GM12878 (cell line): ENCODE measurements at regions of chr6 and their contacts with region 1.

Region 1: DNA sequence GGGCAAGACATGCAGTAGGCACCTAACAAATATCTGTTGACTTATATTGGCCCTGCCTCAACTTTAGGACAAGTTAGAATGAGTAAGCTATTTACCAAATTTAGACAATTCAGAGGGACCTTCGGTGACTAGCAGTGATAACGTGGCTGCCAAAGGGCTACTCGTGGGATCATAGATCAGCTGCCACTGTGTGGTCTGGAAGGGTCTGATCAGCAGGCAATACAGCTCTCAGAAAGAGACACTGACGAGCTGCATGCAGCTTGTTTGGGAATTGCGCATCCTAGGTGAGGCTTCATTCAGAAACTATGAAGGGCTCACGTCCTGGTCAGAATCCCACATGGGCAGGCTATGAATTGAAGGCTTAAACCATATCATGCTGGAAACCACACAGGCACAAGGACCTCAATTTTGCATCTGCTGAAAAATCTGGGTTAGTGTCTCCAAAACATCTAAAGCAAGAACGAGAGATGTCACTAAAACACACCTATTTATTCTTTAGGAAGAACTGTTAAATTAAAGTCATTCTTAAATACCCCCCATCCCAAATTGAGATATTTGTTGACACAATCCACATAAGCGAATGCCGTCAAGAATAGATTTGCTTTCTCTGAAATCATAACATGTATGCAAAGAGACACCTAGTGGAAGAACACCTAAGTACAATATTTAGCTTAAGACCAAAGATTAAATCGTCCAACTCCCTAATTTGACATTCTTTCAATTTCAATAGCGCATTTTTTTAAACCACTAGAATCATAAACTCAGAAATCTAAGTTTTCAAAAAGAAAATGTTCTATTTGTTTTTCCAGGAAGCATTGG is 79.6 kb downstream of the IPCEF1 start:
- DNase-seq: no peak
- ATAC-seq: peak; percentile 88
- H3K4me3 ChIP-seq: no peak overlapping the region
- H3K27ac ChIP-seq: no peak overlapping the region
- H3K4me1 ChIP-seq: peaks cover 7% of the 10 kb centered on the region
- H3K27me3 ChIP-seq: no peaks in the 10 kb centered on the region
- CTCF ChIP-seq: peak; percentile 58 to 77 (median 58); a peak in 5 of 6 replicates
- EP300 ChIP-seq: no peak
- POLR2A ChIP-seq: no peak
- RAD21 ChIP-seq: peak; percentile 79

Region 2: DNA sequence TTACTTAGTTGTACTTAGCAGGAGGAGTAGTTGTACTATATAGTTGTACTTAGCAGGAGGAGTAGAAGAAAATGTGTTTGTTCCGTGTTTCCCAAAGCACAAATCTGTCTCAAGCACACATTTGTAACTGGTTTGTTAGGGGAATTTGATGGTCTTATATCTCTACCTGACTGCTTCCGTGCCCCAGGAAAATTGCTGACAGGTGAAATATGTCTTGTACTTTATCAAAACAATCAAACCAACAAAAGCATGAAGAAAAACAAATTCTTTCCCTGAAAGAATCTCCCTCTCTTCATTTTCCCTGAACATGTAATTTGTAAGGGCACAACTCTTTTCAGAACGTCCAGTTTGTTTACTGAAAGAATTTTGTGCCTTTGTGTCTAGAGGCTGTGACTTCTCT is 1039.3 kb before region 1 on chr6:
- CTCF ChIA-PET with region 1: no interaction called
- POLR2A ChIA-PET with region 1: no interaction called
- RAD21 ChIA-PET with region 1: no interaction called
- SMC1A ChIA-PET with region 1: no interaction called
- in situ Hi-C with region 1: no loop called
- intact Hi-C with region 1: no loop called
- DNase-seq: no peak
- ATAC-seq: no peak
- H3K4me3 ChIP-seq: no peak overlapping the region
- H3K27ac ChIP-seq: no peak overlapping the region
- H3K4me1 ChIP-seq: no peaks in the 10 kb centered on the region
- H3K27me3 ChIP-seq: no peaks in the 10 kb centered on the region
- CTCF ChIP-seq: no peak
- EP300 ChIP-seq: no peak
- POLR2A ChIP-seq: no peak
- RAD21 ChIP-seq: no peak

Region 3: GRCh38 chr6:153947808-153948447 is 329.1 kb before region 1 on chr6:
- CTCF ChIA-PET with region 1: interaction called, 5 read pairs
- POLR2A ChIA-PET with region 1: no interaction called
- RAD21 ChIA-PET with region 1: no interaction called
- SMC1A ChIA-PET with region 1: no interaction called
- in situ Hi-C with region 1: no loop called
- intact Hi-C with region 1: loop called (anchors 10 kb)
- DNase-seq: no peak
- ATAC-seq: 0 out of 3 replicates have a peak, but pooled peaks have one; percentile 42
- H3K4me3 ChIP-seq: no peak overlapping the region
- H3K27ac ChIP-seq: no peak overlapping the region
- H3K4me1 ChIP-seq: no peaks in the 10 kb centered on the region
- H3K27me3 ChIP-seq: no peaks in the 10 kb centered on the region; a peak in 1 of 4 replicates
- CTCF ChIP-seq: peak; percentile 78 to 96 (median 95)
- EP300 ChIP-seq: no peak
- POLR2A ChIP-seq: no peak
- RAD21 ChIP-seq: peak; percentile 72

Region 4: DNA sequence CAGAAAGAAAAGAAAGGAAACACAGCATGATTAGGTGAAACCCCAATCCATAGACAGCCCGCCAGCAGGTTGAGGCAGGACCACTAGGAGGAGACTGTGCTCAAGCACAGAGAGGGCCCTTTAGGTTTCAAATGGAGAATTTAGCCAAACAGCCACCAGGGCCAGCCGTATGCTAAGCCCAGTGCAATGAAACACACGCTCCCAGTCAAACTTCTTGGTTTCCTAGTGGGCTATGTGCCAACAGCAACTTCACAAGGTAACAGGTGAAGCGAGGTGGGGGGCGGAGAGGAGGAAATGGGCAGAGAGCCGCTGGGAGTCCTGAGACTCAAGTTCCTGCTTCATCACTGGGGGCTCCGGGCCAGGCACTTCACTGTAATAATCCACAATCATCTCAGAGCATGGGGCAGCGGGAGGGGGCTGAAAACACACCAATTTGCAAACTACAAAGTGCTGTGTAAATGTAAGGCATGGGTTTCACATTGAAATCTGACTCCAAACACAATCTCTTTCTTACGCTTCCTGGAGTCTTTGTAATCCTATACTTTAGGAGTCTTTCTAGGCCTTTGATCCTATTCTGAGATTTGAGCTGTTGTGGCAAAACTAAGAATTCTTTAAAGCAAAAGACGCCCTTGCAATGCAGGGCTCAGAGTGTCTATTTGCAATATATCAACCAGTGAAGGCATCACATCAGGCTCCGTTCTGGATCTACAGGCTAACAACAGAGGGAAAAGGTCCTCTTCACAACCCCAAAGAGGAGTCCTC is 120.7 kb before region 1 on chr6:
- CTCF ChIA-PET with region 1: interaction called, 110 read pairs
- POLR2A ChIA-PET with region 1: interaction called, 4 read pairs
- RAD21 ChIA-PET with region 1: interaction called, 56 read pairs
- SMC1A ChIA-PET with region 1: interaction called, 258 read pairs
- in situ Hi-C with region 1: loop called (anchors 5 kb)
- intact Hi-C with region 1: loop called (anchors 1 kb)
- DNase-seq: no peak
- ATAC-seq: peak; percentile 79
- H3K4me3 ChIP-seq: peak overlapping the region; percentile 35; the same call in 1 of the 2 replicates
- H3K27ac ChIP-seq: peak overlapping the region; percentile 64
- H3K4me1 ChIP-seq: peaks cover 16% of the 10 kb centered on the region
- H3K27me3 ChIP-seq: no peaks in the 10 kb centered on the region; a peak in 1 of 4 replicates
- CTCF ChIP-seq: peak; percentile 55 to 73 (median 64)
- EP300 ChIP-seq: no peak
- POLR2A ChIP-seq: no peak
- RAD21 ChIP-seq: peak; percentile 71

Region 5: GRCh38 chr6:154229786-154230185 is 47.2 kb before region 1 on chr6:
- CTCF ChIA-PET with region 1: interaction called, 25 read pairs
- POLR2A ChIA-PET with region 1: interaction called, 3 read pairs
- RAD21 ChIA-PET with region 1: interaction called, 5 read pairs
- SMC1A ChIA-PET with region 1: interaction called, 34 read pairs
- in situ Hi-C with region 1: no loop called
- intact Hi-C with region 1: loop called (anchors 5 kb)
- DNase-seq: no peak
- ATAC-seq: peak; percentile 82
- H3K4me3 ChIP-seq: 0 out of 2 replicates have a peak overlapping the region, but pooled peaks have one; percentile 4
- H3K27ac ChIP-seq: peak overlapping the region; percentile 35; the same call in 1 of the 2 replicates
- H3K4me1 ChIP-seq: peaks cover 9% of the 10 kb centered on the region
- H3K27me3 ChIP-seq: no peaks in the 10 kb centered on the region
- CTCF ChIP-seq: no peak
- EP300 ChIP-seq: peak in 1 of 2 experiments; percentile 63; a peak in 1 of 4 replicates
- POLR2A ChIP-seq: no peak
- RAD21 ChIP-seq: no peak

Region 6: DNA sequence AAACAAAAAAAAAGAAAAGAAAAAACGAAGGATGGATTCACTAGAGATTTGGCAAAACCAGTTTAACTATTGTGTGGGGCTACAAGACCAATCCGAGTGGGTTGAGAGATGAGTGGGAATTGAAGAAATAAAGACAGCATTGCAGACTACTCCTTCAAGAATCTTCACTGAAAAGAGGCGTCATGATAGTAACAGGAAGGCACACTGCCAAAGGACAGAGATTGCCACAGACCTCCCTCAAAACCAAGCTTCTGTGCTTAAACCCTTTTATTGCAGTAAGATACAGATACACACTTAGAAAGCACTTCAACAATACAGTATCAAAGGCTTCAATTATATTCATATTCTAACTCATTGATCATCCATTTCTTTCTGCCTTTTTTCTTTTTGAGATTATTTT is 24.3 kb before region 1 on chr6:
- CTCF ChIA-PET with region 1: interaction called, 90 read pairs
- POLR2A ChIA-PET with region 1: interaction called, 7 read pairs
- RAD21 ChIA-PET with region 1: interaction called, 70 read pairs
- SMC1A ChIA-PET with region 1: interaction called, 116 read pairs
- in situ Hi-C with region 1: no loop called
- intact Hi-C with region 1: loop called (anchors 2 kb)
- DNase-seq: no peak
- ATAC-seq: no peak
- H3K4me3 ChIP-seq: no peak overlapping the region
- H3K27ac ChIP-seq: no peak overlapping the region
- H3K4me1 ChIP-seq: peaks cover 36% of the 10 kb centered on the region
- H3K27me3 ChIP-seq: no peaks in the 10 kb centered on the region
- CTCF ChIP-seq: no peak
- EP300 ChIP-seq: no peak
- POLR2A ChIP-seq: no peak
- RAD21 ChIP-seq: no peak

Region 7: GRCh38 chr6:154370545-154370944 is 93.5 kb after region 1 on chr6:
- CTCF ChIA-PET with region 1: interaction called, 25 read pairs
- POLR2A ChIA-PET with region 1: no interaction called
- RAD21 ChIA-PET with region 1: interaction called, 8 read pairs
- SMC1A ChIA-PET with region 1: interaction called, 28 read pairs
- in situ Hi-C with region 1: no loop called
- intact Hi-C with region 1: no loop called
- DNase-seq: no peak
- ATAC-seq: peak; percentile 68
- H3K4me3 ChIP-seq: no peak overlapping the region
- H3K27ac ChIP-seq: no peak overlapping the region
- H3K4me1 ChIP-seq: no peaks in the 10 kb centered on the region
- H3K27me3 ChIP-seq: no peaks in the 10 kb centered on the region; a peak in 1 of 4 replicates
- CTCF ChIP-seq: peak; percentile 38 to 55 (median 41); a peak in 5 of 6 replicates
- EP300 ChIP-seq: no peak
- POLR2A ChIP-seq: no peak
- RAD21 ChIP-seq: peak; percentile 53